GM12878 (cell line): ENCODE measurements at regions of chr3 and their contacts with region 1.

Region 1: DNA sequence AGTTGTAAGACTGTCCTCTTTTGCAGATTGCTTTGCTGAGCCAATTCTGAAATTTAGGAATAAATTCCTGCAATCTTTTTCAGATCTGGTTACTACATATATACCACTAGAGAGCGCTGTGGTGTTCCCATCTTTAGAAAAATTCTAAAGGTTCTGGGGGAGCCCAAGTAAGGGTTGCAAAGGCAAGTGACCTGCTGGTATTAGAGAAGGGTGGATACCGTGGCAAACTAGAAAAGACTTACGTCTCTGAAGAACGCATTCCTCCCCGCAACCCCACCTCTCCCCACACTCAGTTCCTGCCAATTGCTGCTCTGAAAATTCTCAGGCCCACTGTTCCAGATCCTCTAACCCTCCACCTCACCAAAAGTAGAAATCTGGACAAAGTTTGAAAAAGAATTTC is 48.5 kb downstream of the EFHB start:
- DNase-seq: no peak
- ATAC-seq: peak; percentile 82
- H3K4me3 ChIP-seq: no peak overlapping the region
- H3K27ac ChIP-seq: no peak overlapping the region
- H3K4me1 ChIP-seq: no peaks in the 10 kb centered on the region
- H3K27me3 ChIP-seq: no peaks in the 10 kb centered on the region
- CTCF ChIP-seq: peak; percentile 27 to 59 (median 48); a peak in 5 of 6 replicates
- EP300 ChIP-seq: no peak
- POLR2A ChIP-seq: no peak
- RAD21 ChIP-seq: peak; percentile 76

Region 2: DNA sequence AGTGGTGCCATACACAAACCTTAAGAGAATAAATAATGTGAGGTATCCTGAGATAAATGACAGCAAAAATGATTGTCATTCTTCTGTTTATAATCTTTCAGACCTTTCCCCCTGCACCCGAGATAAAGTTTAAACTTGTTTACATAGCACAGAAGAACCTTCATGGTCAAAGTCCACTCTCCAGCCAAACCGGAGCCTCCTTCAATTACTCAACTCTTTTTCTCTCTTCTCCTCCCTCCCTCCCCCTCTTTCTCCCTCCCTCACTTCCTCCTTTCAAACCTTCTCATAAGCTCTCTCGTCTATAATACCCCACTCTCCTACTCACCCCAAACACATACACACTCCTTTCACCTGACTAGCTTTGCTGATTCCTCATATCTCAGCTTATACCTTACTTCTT is 150.4 kb before region 1 on chr3:
- CTCF ChIA-PET with region 1: no interaction called
- POLR2A ChIA-PET with region 1: no interaction called
- RAD21 ChIA-PET with region 1: no interaction called
- SMC1A ChIA-PET with region 1: no interaction called
- in situ Hi-C with region 1: no loop called
- intact Hi-C with region 1: no loop called
- DNase-seq: no peak
- ATAC-seq: no peak
- H3K4me3 ChIP-seq: no peak overlapping the region
- H3K27ac ChIP-seq: no peak overlapping the region
- H3K4me1 ChIP-seq: no peaks in the 10 kb centered on the region
- H3K27me3 ChIP-seq: no peaks in the 10 kb centered on the region
- CTCF ChIP-seq: no peak
- EP300 ChIP-seq: no peak
- POLR2A ChIP-seq: no peak
- RAD21 ChIP-seq: no peak

Region 3: GRCh38 chr3:19792388-19792787 is 93.1 kb before region 1 on chr3:
- CTCF ChIA-PET with region 1: no interaction called
- POLR2A ChIA-PET with region 1: no interaction called
- RAD21 ChIA-PET with region 1: no interaction called
- SMC1A ChIA-PET with region 1: no interaction called
- in situ Hi-C with region 1: no loop called
- intact Hi-C with region 1: no loop called
- DNase-seq: no peak
- ATAC-seq: no peak
- H3K4me3 ChIP-seq: no peak overlapping the region
- H3K27ac ChIP-seq: no peak overlapping the region
- H3K4me1 ChIP-seq: no peaks in the 10 kb centered on the region
- H3K27me3 ChIP-seq: no peaks in the 10 kb centered on the region
- CTCF ChIP-seq: no peak
- EP300 ChIP-seq: no peak
- POLR2A ChIP-seq: no peak
- RAD21 ChIP-seq: no peak

Region 4: DNA sequence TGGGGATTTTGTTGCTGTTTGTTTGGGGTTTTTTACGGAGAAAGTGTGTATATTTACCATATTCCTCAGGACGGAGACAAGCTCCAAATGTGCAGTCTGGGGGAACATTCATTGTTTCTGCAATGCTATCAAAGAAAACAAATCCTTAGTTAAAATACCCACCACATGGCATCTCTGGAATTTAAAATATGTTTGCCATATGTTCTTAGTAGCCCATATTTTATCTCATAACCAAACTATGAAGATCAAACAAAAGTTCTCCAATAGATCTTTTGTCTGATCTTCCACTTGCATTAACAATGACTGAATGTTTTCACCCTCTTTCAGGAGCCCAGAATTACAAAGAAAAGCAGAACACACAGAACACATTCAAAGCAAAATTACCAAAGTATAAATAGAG is 13.3 kb after region 1 on chr3:
- CTCF ChIA-PET with region 1: interaction called, 12 read pairs
- POLR2A ChIA-PET with region 1: no interaction called
- RAD21 ChIA-PET with region 1: no interaction called
- SMC1A ChIA-PET with region 1: interaction called, 14 read pairs
- in situ Hi-C with region 1: no loop called
- intact Hi-C with region 1: no loop called
- DNase-seq: no peak
- ATAC-seq: no peak
- H3K4me3 ChIP-seq: no peak overlapping the region
- H3K27ac ChIP-seq: no peak overlapping the region
- H3K4me1 ChIP-seq: no peaks in the 10 kb centered on the region
- H3K27me3 ChIP-seq: no peaks in the 10 kb centered on the region
- CTCF ChIP-seq: no peak
- EP300 ChIP-seq: no peak
- POLR2A ChIP-seq: no peak
- RAD21 ChIP-seq: no peak

Region 5: DNA sequence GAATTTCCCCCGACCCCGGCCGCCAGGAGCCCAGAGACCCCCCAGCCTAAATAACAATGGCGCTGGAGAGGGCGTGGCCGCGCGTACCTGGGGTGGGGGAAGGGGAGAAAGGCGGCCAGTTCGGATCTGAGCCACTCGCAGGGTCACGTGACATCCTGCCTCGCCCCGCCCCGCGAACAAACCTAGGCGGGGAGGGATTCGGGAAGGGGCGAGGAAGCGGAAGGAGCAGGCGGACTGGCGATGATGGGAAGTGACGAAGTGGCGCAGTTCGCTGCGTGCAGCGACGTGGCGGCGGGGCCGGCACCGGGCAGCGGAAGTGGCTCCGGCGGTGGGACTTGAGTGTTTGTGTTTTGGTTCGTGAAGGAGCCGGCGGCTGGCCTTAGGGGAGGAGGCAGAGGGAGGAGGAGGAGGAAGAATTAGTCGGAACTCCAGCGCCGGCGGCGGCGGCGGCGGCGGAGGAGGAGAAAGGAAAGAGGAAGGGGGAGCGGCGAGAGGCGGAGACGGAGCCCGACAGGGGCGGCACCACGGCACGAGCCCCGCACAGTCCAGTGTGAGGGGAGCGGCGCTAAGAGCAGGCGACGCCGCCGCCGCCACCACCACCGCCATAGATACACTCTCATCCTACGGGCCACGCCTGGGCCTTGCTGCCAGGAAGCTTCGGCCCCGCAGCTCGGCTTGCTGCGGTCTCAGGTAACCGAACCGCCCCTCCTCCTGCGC is 61.5 kb after region 1 on chr3 and contains the start of gene RAB5A:
- CTCF ChIA-PET with region 1: interaction called, 4 read pairs
- POLR2A ChIA-PET with region 1: no interaction called
- RAD21 ChIA-PET with region 1: interaction called, 4 read pairs
- SMC1A ChIA-PET with region 1: interaction called, 5 read pairs
- in situ Hi-C with region 1: no loop called
- intact Hi-C with region 1: loop called (anchors 5 kb)
- DNase-seq: peak; percentile 94
- ATAC-seq: peak; percentile 92
- H3K4me3 ChIP-seq: peak within 1 kb of the TSS; percentile 89
- H3K27ac ChIP-seq: peak within 1 kb of the TSS; percentile 91
- H3K4me1 ChIP-seq: peaks cover 3% of the 10 kb centered on the region; the same call in 1 of the 2 replicates
- H3K27me3 ChIP-seq: no peaks in the 10 kb centered on the region
- CTCF ChIP-seq: no peak
- EP300 ChIP-seq: peak in 1 of 2 experiments; percentile 31; a peak in 1 of 4 replicates
- POLR2A ChIP-seq: peak; percentile 90
- RAD21 ChIP-seq: no peak
- polyA plus RNA-seq, gene RAB5A: 15.8 to 16.2 TPM

Region 6: GRCh38 chr3:20125897-20126296 is 240.4 kb after region 1 on chr3:
- CTCF ChIA-PET with region 1: no interaction called
- POLR2A ChIA-PET with region 1: no interaction called
- RAD21 ChIA-PET with region 1: no interaction called
- SMC1A ChIA-PET with region 1: no interaction called
- in situ Hi-C with region 1: no loop called
- intact Hi-C with region 1: loop called (anchors 10 kb)
- DNase-seq: peak; percentile 71
- ATAC-seq: peak; percentile 99
- H3K4me3 ChIP-seq: peak overlapping the region; percentile 27; the same call in 1 of the 2 replicates
- H3K27ac ChIP-seq: peak overlapping the region; percentile 62
- H3K4me1 ChIP-seq: peaks cover 14% of the 10 kb centered on the region
- H3K27me3 ChIP-seq: no peaks in the 10 kb centered on the region
- CTCF ChIP-seq: no peak
- EP300 ChIP-seq: peak; percentile 56 to 71; a peak in 2 of 4 replicates
- POLR2A ChIP-seq: no peak
- RAD21 ChIP-seq: no peak

Region 7: DNA sequence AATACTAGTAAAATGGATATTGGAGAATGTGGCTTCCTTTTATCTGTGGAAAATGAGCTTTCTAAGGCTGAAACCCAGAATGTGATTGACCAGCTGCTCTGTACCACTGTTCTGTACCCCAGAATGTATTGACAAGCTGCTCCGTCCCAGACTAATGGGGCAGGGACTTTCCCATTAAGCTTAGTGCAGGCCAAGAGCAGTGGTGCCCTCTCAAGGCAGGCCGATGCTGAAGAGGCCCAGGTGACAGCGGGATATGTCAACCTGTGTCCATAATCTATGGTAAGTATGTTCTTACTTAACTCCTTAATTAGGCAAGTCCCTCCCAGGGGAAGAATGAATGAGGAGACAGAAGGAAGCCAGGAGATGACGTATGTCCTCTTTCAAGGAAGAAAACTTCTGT is 269.5 kb after region 1 on chr3:
- CTCF ChIA-PET with region 1: interaction called, 14 read pairs
- POLR2A ChIA-PET with region 1: no interaction called
- RAD21 ChIA-PET with region 1: no interaction called
- SMC1A ChIA-PET with region 1: interaction called, 3 read pairs
- in situ Hi-C with region 1: no loop called
- intact Hi-C with region 1: loop called (anchors 10 kb)
- DNase-seq: no peak
- ATAC-seq: no peak
- H3K4me3 ChIP-seq: no peak overlapping the region
- H3K27ac ChIP-seq: no peak overlapping the region
- H3K4me1 ChIP-seq: no peaks in the 10 kb centered on the region
- H3K27me3 ChIP-seq: no peaks in the 10 kb centered on the region
- CTCF ChIP-seq: peak in 1 of 3 experiments; percentile 27; a peak in 2 of 6 replicates
- EP300 ChIP-seq: no peak
- POLR2A ChIP-seq: no peak
- RAD21 ChIP-seq: peak; percentile 49

Region 8: GRCh38 chr3:20185701-20186598 is 300.5 kb after region 1 on chr3 and contains the start of gene SGO1:
- CTCF ChIA-PET with region 1: no interaction called
- POLR2A ChIA-PET with region 1: no interaction called
- RAD21 ChIA-PET with region 1: interaction called, 3 read pairs
- SMC1A ChIA-PET with region 1: no interaction called
- in situ Hi-C with region 1: no loop called
- intact Hi-C with region 1: loop called (anchors 10 kb)
- DNase-seq: peak; percentile 97
- ATAC-seq: peak; percentile 90
- H3K4me3 ChIP-seq: peak within 1 kb of the TSS; percentile 80
- H3K27ac ChIP-seq: peak within 1 kb of the TSS; percentile 89
- H3K4me1 ChIP-seq: no peaks in the 10 kb centered on the region
- H3K27me3 ChIP-seq: no peaks in the 10 kb centered on the region
- CTCF ChIP-seq: no peak
- EP300 ChIP-seq: peak in 1 of 2 experiments; percentile 17; a peak in 1 of 4 replicates
- POLR2A ChIP-seq: peak; percentile 93
- RAD21 ChIP-seq: peak; percentile 29; the same call in 1 of the 2 replicates
- polyA plus RNA-seq, gene SGO1: 12.3 to 14.0 TPM

Region 9: GRCh38 chr3:20324714-20325478 is 439.4 kb after region 1 on chr3:
- CTCF ChIA-PET with region 1: no interaction called
- POLR2A ChIA-PET with region 1: no interaction called
- RAD21 ChIA-PET with region 1: no interaction called
- SMC1A ChIA-PET with region 1: no interaction called
- in situ Hi-C with region 1: no loop called
- intact Hi-C with region 1: loop called (anchors 10 kb)
- DNase-seq: peak; percentile 39
- ATAC-seq: peak; percentile 99
- H3K4me3 ChIP-seq: no peak overlapping the region
- H3K27ac ChIP-seq: no peak overlapping the region
- H3K4me1 ChIP-seq: peaks cover 4% of the 10 kb centered on the region; the same call in 1 of the 2 replicates
- H3K27me3 ChIP-seq: no peaks in the 10 kb centered on the region
- CTCF ChIP-seq: no peak
- EP300 ChIP-seq: 0 out of 4 replicates have a peak, but pooled peaks of 1 of the 2 experiments have one; percentile 34
- POLR2A ChIP-seq: no peak
- RAD21 ChIP-seq: no peak